B cell (primary cell): ENCODE measurements at regions of chr11 and their contacts with region 1.

Region 1: DNA sequence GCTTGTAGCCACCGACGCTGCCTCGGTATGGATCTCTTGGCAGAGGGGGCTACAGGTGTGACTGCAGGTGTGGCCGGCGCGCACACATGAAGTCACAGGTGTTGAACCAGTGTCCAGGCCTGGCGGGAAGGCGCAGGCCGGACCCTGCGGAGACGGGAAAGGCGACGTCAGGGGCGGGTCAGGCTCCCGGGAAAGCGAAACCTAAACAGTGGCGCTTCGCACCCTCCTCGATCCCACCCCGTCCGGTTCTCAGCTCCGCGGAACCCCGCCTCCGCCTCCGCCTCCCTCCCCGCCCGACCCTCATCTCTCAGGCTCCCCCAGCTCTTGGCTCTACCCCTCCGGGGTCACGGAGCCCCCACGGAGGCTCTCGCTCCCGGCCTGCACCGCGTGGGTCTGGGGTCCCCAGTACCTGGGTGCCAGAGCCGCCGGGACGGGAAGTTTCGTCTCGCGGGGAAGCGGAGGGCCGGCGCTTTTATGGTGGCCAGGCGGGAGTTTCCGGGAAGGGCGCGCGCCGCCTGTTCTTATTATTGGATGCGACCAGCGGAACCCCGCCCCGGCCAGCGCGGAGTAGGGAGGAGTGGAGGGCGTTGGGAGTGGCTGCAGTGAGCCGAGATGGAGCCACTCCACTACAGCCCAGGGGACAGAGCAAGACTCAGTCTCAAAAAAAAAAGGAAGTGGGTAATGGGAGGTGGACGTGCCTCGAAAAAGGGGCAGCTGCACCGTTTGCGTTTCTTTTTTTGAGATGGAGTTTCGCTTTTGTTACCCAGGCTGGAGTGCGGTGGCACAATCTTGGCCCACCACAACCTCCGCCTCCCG is at the start of gene IRF7:
- DNase-seq: peak; percentile 96
- ATAC-seq: peak; percentile 95
- H3K4me3 ChIP-seq: peak within 1 kb of the TSS; percentile 45 to 83 (median 79)
- H3K4me3 Mint-ChIP-seq: peak within 1 kb of the TSS; percentile 92
- H3K27ac ChIP-seq: peak within 1 kb of the TSS; percentile 81 to 85
- H3K27ac Mint-ChIP-seq: peak within 1 kb of the TSS; percentile 94
- H3K4me1 ChIP-seq: peaks cover 18 to 35% of the 10 kb centered on the region in 2 donors
- H3K4me1 Mint-ChIP-seq: peaks cover 17% of the 10 kb centered on the region
- H3K27me3 ChIP-seq: no peaks in the 10 kb centered on the region
- H3K27me3 Mint-ChIP-seq: no peaks in the 10 kb centered on the region
- CTCF ChIP-seq: no peak
- total RNA-seq, gene IRF7: 136 and 147 TPM in 2 replicates

Region 2: DNA sequence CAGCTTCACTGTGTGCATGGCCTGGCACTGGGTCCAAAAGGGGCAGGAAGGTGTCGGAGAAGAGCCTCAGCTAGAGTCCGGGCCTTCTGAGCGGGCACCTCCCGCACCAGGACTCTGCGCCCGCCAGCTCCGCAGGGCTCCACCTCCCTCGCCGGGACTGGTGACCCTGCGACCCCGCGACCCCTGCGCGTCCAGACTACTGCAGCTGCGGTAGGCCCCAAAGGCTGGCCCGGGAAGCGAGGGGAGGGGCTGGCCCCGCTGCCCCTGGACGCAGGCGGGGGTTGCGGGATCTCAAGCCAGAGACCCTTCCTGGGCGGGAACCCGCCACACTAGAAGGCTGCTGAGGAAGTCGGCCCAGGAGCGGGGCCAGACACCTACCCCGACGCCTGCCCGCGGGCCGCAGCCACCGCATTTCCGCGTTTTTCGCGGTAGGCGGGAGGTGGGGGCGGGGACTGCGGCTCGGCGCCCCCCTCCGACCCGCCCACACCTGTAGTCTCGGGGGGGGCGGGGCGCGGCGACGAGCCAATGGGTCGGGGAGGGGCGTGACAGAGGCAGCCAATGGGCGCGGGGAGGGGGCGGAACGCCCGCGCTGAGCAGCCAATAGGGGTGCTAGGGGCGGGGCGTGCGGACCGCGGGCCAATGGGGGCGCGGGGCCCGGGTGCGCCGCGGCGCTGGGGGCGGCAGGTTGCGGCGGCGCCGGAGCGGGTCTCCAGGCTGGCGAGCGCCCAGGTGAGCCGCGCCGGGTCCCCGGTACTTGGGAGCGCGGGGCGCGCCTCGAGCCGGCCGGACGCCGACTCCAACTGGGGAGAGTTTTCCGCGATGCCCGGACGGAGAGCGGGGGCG is 55.2 kb before region 1 on chr11 and contains the starts of genes LMNTD2 and RASSF7:
- CTCF ChIA-PET with region 1: interaction called, 8 read pairs
- POLR2A ChIA-PET with region 1: interaction called, 3 read pairs
- intact Hi-C with region 1: loop called (anchors 1 kb)
- DNase-seq: peak; percentile 95
- ATAC-seq: peak; percentile 97
- H3K4me3 ChIP-seq: peak within 1 kb of the TSS; percentile 15 to 70 (median 66)
- H3K4me3 Mint-ChIP-seq: peak within 1 kb of the TSS; percentile 88
- H3K27ac ChIP-seq: peak within 1 kb of the TSS; percentile 75 to 89
- H3K27ac Mint-ChIP-seq: peak within 1 kb of the TSS; percentile 83
- H3K4me1 ChIP-seq: peaks cover 14 to 29% of the 10 kb centered on the region in 2 donors
- H3K4me1 Mint-ChIP-seq: peaks cover 16% of the 10 kb centered on the region
- H3K27me3 ChIP-seq: peaks cover 0 to 8% (median 2%) of the 10 kb centered on the region in 4 experiments
- H3K27me3 Mint-ChIP-seq: no peaks in the 10 kb centered on the region
- CTCF ChIP-seq: no peak
- total RNA-seq, gene LMNTD2: 19.7 and 21.4 TPM in 2 replicates
- total RNA-seq, gene RASSF7: 24.7 and 29.8 TPM in 2 replicates

Region 3: GRCh38 chr11:575996-576768 is 39.5 kb before region 1 on chr11 and contains the start of gene PHRF1:
- CTCF ChIA-PET with region 1: interaction called, 3 read pairs
- POLR2A ChIA-PET with region 1: interaction called, 13 read pairs
- intact Hi-C with region 1: loop called (anchors 1 kb)
- DNase-seq: peak; percentile 98
- ATAC-seq: peak; percentile 87
- H3K4me3 ChIP-seq: peak within 1 kb of the TSS; percentile 65 to 95 (median 86)
- H3K4me3 Mint-ChIP-seq: peak within 1 kb of the TSS; percentile 93
- H3K27ac ChIP-seq: peak within 1 kb of the TSS; percentile 97 to 98
- H3K27ac Mint-ChIP-seq: peak within 1 kb of the TSS; percentile 99
- H3K4me1 ChIP-seq: peaks cover 30 to 44% of the 10 kb centered on the region in 2 donors
- H3K4me1 Mint-ChIP-seq: peaks cover 44% of the 10 kb centered on the region
- H3K27me3 ChIP-seq: peaks cover 0 to 18% (median 8%) of the 10 kb centered on the region in 4 experiments
- H3K27me3 Mint-ChIP-seq: peaks cover 15% of the 10 kb centered on the region
- CTCF ChIP-seq: no peak
- total RNA-seq, gene PHRF1: 57.9 and 63.5 TPM in 2 replicates

Region 4: DNA sequence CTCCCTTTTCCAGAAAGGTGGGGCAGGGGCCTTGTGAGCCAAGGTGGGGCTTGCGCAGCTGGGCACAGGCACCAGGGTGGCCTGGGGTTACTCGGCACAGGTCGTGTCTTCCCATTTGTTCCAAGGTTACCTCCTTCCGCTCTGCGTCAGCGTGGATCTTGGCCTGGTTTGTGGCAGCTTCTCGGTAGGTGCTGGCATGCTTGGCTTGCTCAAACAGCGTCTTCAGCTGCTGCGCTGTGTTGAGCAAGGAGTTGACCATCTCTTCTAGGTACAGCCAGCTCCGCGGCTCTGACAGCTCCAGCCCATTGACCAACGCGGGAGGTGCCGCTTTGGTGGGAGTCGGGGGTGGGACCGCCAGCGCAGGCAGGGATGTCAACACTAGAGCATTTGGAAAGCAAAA is 58.7 kb after region 1 on chr11:
- CTCF ChIA-PET with region 1: no interaction called
- POLR2A ChIA-PET with region 1: no interaction called
- intact Hi-C with region 1: no loop called
- DNase-seq: no peak
- ATAC-seq: no peak
- H3K4me3 ChIP-seq: no peak overlapping the region
- H3K4me3 Mint-ChIP-seq: no peak overlapping the region
- H3K27ac ChIP-seq: no peak overlapping the region
- H3K27ac Mint-ChIP-seq: no peak overlapping the region
- H3K4me1 ChIP-seq: no peaks in the 10 kb centered on the region
- H3K4me1 Mint-ChIP-seq: no peaks in the 10 kb centered on the region
- H3K27me3 ChIP-seq: no peaks in the 10 kb centered on the region
- H3K27me3 Mint-ChIP-seq: no peaks in the 10 kb centered on the region
- CTCF ChIP-seq: no peak

Region 5: GRCh38 chr11:727859-728748 is 112.4 kb after region 1 on chr11:
- CTCF ChIA-PET with region 1: interaction called, 4 read pairs
- POLR2A ChIA-PET with region 1: no interaction called
- intact Hi-C with region 1: loop called (anchors 10 kb)
- DNase-seq: peak; percentile 85
- ATAC-seq: peak; percentile 85
- H3K4me3 ChIP-seq: no peak overlapping the region
- H3K4me3 Mint-ChIP-seq: no peak overlapping the region
- H3K27ac ChIP-seq: no peak overlapping the region
- H3K27ac Mint-ChIP-seq: no peak overlapping the region
- H3K4me1 ChIP-seq: peaks cover 14 to 29% of the 10 kb centered on the region in 2 donors
- H3K4me1 Mint-ChIP-seq: peaks cover 12% of the 10 kb centered on the region
- H3K27me3 ChIP-seq: peaks cover 0 to 24% (median 0%) of the 10 kb centered on the region in 4 experiments
- H3K27me3 Mint-ChIP-seq: peaks cover 4% of the 10 kb centered on the region
- CTCF ChIP-seq: peak; percentile 97

Region 6: DNA sequence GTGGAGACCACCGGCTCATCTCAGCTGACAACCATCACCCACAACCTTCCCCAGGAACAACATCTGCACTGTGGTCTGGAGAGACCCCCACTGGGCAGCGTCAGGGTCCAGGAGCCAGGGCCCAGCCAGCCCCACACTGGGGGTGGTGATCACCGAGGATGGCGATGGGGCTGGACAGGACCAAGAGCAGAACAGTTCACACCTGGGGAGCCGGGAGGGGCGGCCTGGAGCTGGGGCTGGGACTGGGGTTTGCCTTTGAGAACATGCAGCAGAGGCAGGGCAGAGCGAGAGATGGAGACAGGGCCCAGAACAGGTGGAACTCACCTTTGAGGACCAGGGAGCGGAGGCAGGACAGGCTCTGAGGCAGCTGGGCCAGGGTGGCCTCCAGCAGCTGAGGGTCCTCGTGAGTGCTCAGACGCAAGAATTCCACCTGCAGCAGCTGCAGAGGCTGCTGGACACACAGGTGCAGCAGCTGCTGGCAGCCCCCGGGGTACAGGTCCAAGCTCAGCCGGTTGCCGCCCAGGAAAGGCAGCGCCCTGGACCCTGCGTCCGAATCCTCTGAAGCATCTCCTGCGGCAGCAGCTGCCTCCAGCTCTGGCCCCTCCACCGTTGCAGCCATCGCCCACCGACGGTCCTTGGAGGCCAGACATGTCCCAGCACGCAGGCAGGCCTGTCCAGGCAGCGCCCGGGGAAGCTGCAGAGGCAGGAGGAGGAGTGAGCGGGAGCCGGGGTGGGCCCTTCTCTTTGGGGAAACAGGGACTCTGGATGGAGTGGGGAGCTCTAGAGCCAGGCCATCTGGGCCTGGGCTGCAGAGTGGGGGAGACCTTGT is 188.3 kb after region 1 on chr11:
- CTCF ChIA-PET with region 1: no interaction called
- POLR2A ChIA-PET with region 1: no interaction called
- intact Hi-C with region 1: loop called (anchors 2 kb)
- DNase-seq: no peak
- ATAC-seq: no peak
- H3K4me3 ChIP-seq: peak overlapping the region in 4 of 5 experiments; percentile 62 to 71 (median 71)
- H3K4me3 Mint-ChIP-seq: peak overlapping the region; percentile 80
- H3K27ac ChIP-seq: peak overlapping the region; percentile 20 to 75
- H3K27ac Mint-ChIP-seq: peak overlapping the region; percentile 81
- H3K4me1 ChIP-seq: peaks cover 16 to 31% of the 10 kb centered on the region in 2 donors
- H3K4me1 Mint-ChIP-seq: peaks cover 19% of the 10 kb centered on the region
- H3K27me3 ChIP-seq: no peaks in the 10 kb centered on the region
- H3K27me3 Mint-ChIP-seq: no peaks in the 10 kb centered on the region
- CTCF ChIP-seq: no peak